ENCODE measurements at regions of chr3 and their contacts with region 1.

Region 1: DNA sequence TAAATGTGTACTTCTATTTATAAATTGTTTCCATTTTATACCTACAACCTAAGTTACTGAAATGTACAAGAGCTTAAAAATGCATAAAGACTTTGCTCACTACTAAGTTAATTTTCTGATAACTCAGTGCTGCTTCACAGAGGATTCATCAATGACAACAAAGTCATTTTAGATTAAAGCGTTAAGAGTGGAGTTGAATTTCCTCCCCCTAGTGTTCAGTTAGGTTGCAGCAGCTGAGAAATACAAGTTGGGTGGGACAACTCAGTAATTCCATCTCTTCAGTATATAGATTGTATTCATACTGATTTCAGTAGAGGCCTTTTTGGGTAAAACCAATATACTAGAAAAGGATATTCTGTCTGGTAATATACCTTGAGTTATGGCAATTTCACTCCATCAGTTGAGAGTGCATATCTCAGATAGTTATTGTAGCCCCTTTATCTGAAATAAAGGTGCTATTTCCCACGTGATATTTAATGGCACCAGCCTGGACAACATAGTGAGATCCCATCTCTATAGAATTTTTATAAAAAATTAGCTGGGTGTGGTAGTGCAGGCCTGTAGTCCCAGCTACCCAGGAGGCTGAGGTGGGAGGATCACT is 6.9 kb upstream of the RPL35A start:
- DNase-seq: no peak
- H3K4me3 ChIP-seq: no peak overlapping the region
- CTCF ChIP-seq: peak; percentile 75

Region 2: GRCh38 chr3:197835509-197835908 is 107.5 kb before region 1 on chr3:
- CTCF ChIA-PET with region 1: no interaction called
- POLR2A ChIA-PET with region 1: no interaction called
- DNase-seq: no peak
- H3K4me3 ChIP-seq: no peak overlapping the region
- CTCF ChIP-seq: no peak

Region 3: DNA sequence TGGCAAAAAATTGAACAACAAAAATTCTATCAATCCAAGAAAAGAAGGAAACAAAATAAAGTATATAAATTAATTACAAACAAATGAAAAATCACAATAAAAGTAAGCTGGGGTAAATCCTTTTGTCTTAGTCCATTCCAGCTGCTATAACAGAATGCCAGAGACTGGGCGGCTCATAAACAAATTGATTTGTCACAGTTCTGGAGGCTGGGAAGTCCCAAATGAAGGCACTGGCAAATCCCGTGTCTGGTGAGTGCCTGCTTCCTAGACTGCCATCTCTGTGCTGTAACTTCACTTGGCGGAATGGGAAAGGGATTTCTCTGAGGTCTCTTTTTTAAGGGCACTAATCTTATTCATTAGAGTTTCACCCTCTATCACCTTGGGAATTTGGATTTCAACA is 46.6 kb before region 1 on chr3:
- CTCF ChIA-PET with region 1: interaction called, 10 read pairs
- POLR2A ChIA-PET with region 1: no interaction called
- DNase-seq: no peak
- H3K4me3 ChIP-seq: no peak overlapping the region
- CTCF ChIP-seq: no peak

Region 4: GRCh38 chr3:197906023-197906849 is 36.8 kb before region 1 on chr3:
- CTCF ChIA-PET with region 1: interaction called, 143 read pairs
- POLR2A ChIA-PET with region 1: no interaction called
- DNase-seq: peak; percentile 80
- H3K4me3 ChIP-seq: no peak overlapping the region
- CTCF ChIP-seq: peak; percentile 96

Region 5: GRCh38 chr3:197912770-197913476 is 30.1 kb before region 1 on chr3:
- CTCF ChIA-PET with region 1: interaction called, 13 read pairs
- POLR2A ChIA-PET with region 1: no interaction called
- DNase-seq: no peak
- H3K4me3 ChIP-seq: no peak overlapping the region
- CTCF ChIP-seq: no peak

Region 6: DNA sequence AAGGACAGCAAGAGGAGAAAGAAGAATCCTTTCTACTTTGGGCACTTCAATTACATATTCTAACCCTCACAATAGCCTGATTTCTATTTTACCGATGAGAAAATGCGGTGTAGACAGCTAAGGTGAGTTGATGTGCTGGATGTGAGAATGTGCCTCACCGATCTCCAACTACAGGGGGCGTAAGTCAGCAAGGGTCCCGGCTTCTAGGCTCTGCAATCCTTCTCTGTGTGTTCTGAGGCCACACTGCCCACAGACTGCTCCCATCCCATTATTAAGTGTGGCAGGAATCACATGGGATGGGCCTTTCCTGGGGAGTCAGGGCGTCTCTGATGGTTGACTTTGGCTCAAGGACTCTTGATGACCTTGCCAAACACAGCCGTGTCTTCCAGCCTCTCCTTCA is 16.6 kb before region 1 on chr3:
- CTCF ChIA-PET with region 1: interaction called, 20 read pairs
- POLR2A ChIA-PET with region 1: interaction called, 3 read pairs
- DNase-seq: no peak
- H3K4me3 ChIP-seq: no peak overlapping the region
- CTCF ChIP-seq: no peak

Region 7: DNA sequence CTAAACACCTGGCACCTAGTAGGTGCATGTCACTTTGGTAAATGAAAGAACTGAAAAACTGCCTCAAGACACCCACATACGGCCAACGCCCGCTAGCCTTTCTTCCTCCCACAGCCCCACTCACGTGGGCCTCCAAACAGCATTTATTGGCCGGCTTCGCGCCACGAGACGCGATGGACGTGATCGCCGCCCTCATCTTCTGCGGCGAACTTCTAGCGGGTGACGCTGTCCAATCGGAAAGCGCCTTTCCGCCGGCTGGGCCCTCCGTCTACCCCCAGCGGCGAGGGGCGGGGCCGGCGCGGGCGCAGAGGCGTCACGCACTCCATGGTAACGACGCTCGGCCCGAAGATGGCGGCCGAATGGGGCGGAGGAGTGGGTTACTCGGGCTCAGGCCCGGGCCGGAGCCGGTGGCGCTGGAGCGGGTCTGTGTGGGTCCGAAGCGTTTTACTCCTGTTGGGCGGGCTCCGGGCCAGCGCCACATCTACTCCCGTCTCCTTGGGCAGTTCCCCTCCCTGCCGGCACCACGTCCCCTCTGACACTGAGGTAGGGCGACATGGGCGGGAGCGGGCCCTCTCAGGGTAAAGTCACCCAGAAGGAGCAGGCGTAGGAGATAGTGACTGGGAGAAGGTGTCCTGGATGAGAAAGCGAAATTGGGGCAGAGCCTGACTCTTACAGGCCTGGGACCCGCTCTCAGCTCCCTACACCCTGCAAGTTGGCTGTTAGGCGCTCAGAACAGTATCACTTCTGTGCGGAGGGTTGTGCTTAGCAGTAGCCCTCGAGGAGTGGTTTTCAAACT is 17.0 kb after region 1 on chr3 and contains the start of gene LMLN:
- CTCF ChIA-PET with region 1: interaction called, 11 read pairs
- POLR2A ChIA-PET with region 1: no interaction called
- DNase-seq: peak; percentile 69
- H3K4me3 ChIP-seq: peak within 1 kb of the TSS; percentile 95
- CTCF ChIP-seq: no peak

Region 8: DNA sequence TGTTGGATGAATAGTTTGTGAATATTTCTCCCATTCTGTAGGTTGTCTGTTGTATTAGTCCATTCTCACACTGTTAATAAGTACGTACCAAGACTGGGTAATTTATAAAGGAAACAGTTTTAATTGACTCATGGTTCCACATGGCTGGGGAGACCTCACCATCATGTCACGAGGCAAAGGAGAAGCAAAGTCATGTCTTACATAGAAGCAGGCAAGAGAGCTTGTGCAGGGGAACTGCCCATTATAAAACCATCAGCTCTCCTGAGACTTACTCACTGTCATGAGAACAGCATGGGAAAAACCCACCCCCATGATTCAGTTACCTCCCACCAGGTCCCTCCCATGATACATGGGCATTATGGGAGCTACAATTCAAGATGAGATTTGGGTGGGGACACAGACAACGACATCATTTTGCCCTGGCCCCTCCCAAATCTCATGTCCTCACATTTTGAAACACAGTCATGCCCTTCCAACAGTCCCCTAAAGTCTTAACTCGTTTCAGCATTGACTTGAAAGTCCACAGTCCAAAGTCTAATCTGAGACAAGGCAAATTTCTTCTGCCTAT is 150.1 kb after region 1 on chr3:
- CTCF ChIA-PET with region 1: no interaction called
- POLR2A ChIA-PET with region 1: no interaction called
- DNase-seq: no peak
- H3K4me3 ChIP-seq: no peak overlapping the region
- CTCF ChIP-seq: no peak